Activated naive CD4-positive, alpha-beta T cell treated with anti-CD3 and anti-CD28 coated beads for 36 hours (primary cell): ENCODE measurements at regions of chr19 and their contacts with region 1.

Region 1: GRCh38 chr19:29714953-29715700 is at the start of gene C19orf12:
- DNase-seq: peak; percentile 69
- H3K4me3 Mint-ChIP-seq: peak within 1 kb of the TSS; percentile 92
- H3K27ac Mint-ChIP-seq: peak within 1 kb of the TSS; percentile 97
- H3K4me1 Mint-ChIP-seq: peaks cover 47% of the 10 kb centered on the region
- H3K27me3 Mint-ChIP-seq: no peaks in the 10 kb centered on the region
- total RNA-seq, gene C19orf12: 21.6 to 24.3 TPM

Region 2: DNA sequence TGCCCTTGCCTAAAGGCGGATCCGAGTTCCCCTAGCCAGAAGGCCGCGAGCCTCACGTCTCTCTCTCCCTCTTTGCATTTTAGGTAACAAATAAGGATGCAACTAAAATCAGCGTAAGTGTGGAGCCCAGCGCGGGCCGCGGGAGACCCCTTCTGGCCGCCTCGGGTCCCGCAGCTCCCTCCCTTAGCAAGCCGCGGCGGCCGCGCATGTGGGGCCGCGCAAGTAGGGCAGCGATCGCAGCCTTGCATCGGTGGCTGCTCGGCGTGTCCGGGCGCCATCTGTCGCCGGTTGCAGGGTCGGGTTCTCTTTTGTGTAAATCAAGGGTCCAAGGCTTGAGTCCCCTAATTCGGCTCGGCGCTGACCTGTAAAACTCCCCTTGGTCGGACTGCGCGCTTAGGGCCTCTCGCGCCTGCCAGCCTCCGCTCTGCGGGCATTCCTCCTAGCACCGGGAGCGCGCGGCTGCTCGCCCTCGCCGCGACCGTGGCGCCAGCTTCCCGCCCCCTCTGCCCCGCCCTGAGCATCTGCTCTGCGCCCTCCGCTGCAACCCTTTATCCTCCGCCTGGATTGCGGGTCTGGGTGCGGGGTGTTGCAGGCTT is 186.7 kb before region 1 on chr19:
- CTCF ChIA-PET with region 1: no interaction called
- intact Hi-C with region 1: loop called (anchors 1 kb)
- DNase-seq: peak; percentile 81
- H3K4me3 Mint-ChIP-seq: peak overlapping the region; percentile 49
- H3K27ac Mint-ChIP-seq: no peak overlapping the region
- H3K4me1 Mint-ChIP-seq: peaks cover 29% of the 10 kb centered on the region
- H3K27me3 Mint-ChIP-seq: peaks cover 67% of the 10 kb centered on the region

Region 3: GRCh38 chr19:29665215-29665825 is 49.8 kb before region 1 on chr19 and contains the start of gene PLEKHF1:
- CTCF ChIA-PET with region 1: interaction called, 96 read pairs
- intact Hi-C with region 1: loop called (anchors 1 kb)
- DNase-seq: peak; percentile 85
- H3K4me3 Mint-ChIP-seq: peak within 1 kb of the TSS; percentile 97
- H3K27ac Mint-ChIP-seq: peak within 1 kb of the TSS; percentile 96
- H3K4me1 Mint-ChIP-seq: peaks cover 71% of the 10 kb centered on the region
- H3K27me3 Mint-ChIP-seq: no peaks in the 10 kb centered on the region
- total RNA-seq, gene PLEKHF1: 20.7 to 21.0 TPM

Region 4: GRCh38 chr19:29680447-29680846 is 34.7 kb before region 1 on chr19:
- CTCF ChIA-PET with region 1: interaction called, 11 read pairs
- intact Hi-C with region 1: no loop called
- DNase-seq: peak; percentile 95
- H3K4me3 Mint-ChIP-seq: peak overlapping the region; percentile 66
- H3K27ac Mint-ChIP-seq: peak overlapping the region; percentile 91
- H3K4me1 Mint-ChIP-seq: peaks cover 53% of the 10 kb centered on the region
- H3K27me3 Mint-ChIP-seq: no peaks in the 10 kb centered on the region

Region 5: DNA sequence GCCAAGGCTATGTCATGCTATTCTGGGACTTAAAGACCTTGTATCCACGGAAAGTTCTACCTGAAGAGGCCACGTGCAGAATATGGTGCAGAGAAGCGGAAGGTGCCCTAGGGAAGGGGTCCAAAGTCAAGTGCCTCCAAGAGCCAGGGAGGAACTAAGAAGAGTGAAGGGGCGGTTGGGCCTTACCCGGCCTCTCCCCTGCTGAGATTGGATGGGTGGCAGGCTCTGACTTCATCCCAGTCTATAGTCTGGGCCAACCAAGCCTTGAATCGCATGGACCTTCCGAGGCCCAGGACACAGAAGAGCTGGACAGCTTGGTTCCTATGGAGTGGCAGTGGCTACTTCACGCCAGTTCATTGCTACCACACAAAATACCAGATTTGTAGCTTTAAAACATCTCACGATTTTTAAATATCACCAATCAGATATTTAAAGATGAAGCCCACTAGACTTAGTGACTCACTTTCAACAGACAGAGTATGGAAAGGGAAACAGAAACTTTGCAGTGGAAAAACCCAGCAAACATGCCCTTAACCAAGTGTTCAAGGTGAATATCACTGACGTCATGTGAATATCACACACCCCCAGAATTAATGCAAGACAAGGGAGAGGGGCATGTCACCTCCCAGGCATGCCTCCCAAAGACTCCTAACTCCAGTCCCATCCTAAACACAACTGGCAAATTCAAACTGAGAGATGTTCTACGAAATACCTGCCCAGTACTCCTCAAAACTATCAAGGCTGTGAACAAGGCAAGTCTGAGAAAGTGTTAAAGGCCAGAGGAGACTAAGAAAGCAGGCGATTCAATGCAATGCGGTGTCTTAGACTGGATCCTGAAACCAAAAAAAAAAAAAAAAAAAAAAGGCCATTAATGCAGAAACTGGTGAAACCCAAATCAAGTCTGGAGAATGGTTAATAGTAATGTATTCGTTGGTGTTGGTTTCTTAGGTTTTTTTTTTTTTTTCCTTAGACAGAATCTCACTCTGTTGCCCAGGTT is 10.3 kb before region 1 on chr19:
- CTCF ChIA-PET with region 1: interaction called, 21 read pairs
- intact Hi-C with region 1: loop called (anchors 1 kb)
- DNase-seq: peak; percentile 44
- H3K4me3 Mint-ChIP-seq: peak overlapping the region; percentile 29
- H3K27ac Mint-ChIP-seq: peak overlapping the region; percentile 95
- H3K4me1 Mint-ChIP-seq: peaks cover 48% of the 10 kb centered on the region
- H3K27me3 Mint-ChIP-seq: no peaks in the 10 kb centered on the region

Region 6: GRCh38 chr19:29844891-29845572 is 129.9 kb after region 1 on chr19:
- CTCF ChIA-PET with region 1: interaction called, 3 read pairs
- intact Hi-C with region 1: loop called (anchors 1 kb)
- DNase-seq: peak; percentile 96
- H3K4me3 Mint-ChIP-seq: peak overlapping the region; percentile 83
- H3K27ac Mint-ChIP-seq: peak overlapping the region; percentile 79
- H3K4me1 Mint-ChIP-seq: peaks cover 10% of the 10 kb centered on the region
- H3K27me3 Mint-ChIP-seq: no peaks in the 10 kb centered on the region

Region 7: DNA sequence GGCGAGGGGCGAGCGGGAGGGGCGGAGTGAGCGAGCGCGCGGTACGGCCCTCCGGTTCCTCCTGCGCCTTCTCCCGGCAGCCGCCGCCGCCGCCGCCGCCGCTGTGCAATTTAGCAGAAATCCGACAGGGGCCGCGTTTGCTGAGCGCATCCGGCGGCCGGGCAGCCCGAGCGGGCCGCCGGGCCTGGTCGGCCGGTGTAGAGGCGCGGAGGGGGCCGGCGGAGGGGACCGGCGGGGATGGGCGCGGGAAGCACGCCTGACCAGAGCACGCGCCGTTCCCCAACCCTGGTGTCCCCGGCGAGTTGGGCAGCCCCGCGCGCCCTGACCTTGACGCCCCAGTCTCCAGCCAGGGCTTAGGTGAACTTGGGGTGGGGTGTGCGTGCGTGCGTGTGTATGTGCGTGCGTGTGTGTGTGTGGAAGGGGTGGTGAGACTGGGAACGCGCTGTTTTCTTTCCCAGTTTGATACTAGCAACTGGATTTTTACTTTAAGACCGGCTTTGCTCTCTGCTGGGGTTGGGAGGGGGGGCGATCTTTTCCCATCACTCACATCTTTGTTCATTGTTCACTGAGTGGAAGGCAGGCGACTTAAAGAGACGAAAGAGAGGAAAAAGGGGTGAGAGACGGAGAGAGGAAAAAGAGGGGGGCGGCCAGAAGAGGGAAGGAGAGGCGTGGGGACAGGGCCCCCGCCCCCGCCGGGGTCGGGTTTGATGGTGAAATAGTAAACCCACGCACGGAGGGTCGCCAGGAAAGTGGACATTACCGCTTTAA is 512.7 kb after region 1 on chr19:
- CTCF ChIA-PET with region 1: no interaction called
- intact Hi-C with region 1: loop called (anchors 10 kb)
- DNase-seq: peak; percentile 70
- H3K4me3 Mint-ChIP-seq: peak overlapping the region; percentile 79
- H3K27ac Mint-ChIP-seq: no peak overlapping the region
- H3K4me1 Mint-ChIP-seq: peaks cover 33% of the 10 kb centered on the region
- H3K27me3 Mint-ChIP-seq: peaks cover 58% of the 10 kb centered on the region